Dendritic cell treated with granulocyte-macrophage colony-stimulating factor and Interleukin-4, amounts not matched to agents 40 ng/mL and 50 ng/mL, for 4 days (primary cell): ENCODE measurements at regions of chr7 and their contacts with region 1.

Region 1: GRCh38 chr7:28155019-28155660 is 25.5 kb downstream of the JAZF1 start:
- H3K4me3 Mint-ChIP-seq: peak overlapping the region; percentile 34
- H3K27ac Mint-ChIP-seq: peak overlapping the region; percentile 88
- H3K4me1 Mint-ChIP-seq: peaks cover 68% of the 10 kb centered on the region
- H3K27me3 Mint-ChIP-seq: no peaks in the 10 kb centered on the region

Region 2: DNA sequence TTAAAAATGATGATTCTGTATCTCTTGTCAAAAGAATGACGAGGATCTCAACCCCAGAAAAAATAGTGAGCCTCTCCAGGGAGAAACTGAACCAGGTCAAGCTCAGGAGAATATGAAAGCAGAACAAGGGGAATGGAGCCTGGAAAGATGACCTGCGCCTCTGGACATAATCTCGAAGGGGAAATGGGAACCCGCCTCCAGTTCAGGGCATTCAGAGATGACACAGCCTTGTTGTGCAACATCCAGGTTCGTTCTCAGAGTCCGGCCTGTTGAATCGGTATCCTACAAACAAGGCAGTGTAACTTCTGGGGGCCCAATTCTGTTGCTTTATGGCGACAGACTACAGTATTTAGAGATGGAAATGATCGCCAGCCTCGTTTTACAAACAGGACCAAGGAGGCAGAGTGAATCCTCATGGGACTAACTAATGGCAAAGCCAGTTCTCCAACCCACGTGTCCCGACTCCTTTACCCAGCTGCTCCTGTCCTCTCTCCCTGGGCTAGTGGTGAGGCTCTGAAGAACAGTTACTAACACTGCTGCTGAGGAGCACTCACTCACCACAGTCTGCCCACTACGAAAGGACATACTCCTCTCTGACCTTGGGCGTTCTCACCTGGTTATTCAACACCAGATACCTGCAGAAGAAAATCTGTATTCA is 42.1 kb before region 1 on chr7:
- intact Hi-C with region 1: loop called (anchors 1 kb)
- H3K4me3 Mint-ChIP-seq: no peak overlapping the region
- H3K27ac Mint-ChIP-seq: peak overlapping the region; percentile 59
- H3K4me1 Mint-ChIP-seq: peaks cover 23% of the 10 kb centered on the region
- H3K27me3 Mint-ChIP-seq: no peaks in the 10 kb centered on the region